Endothelial cell of umbilical vein (primary cell): ENCODE measurements at regions of chr2 and their contacts with region 1.

Region 1: DNA sequence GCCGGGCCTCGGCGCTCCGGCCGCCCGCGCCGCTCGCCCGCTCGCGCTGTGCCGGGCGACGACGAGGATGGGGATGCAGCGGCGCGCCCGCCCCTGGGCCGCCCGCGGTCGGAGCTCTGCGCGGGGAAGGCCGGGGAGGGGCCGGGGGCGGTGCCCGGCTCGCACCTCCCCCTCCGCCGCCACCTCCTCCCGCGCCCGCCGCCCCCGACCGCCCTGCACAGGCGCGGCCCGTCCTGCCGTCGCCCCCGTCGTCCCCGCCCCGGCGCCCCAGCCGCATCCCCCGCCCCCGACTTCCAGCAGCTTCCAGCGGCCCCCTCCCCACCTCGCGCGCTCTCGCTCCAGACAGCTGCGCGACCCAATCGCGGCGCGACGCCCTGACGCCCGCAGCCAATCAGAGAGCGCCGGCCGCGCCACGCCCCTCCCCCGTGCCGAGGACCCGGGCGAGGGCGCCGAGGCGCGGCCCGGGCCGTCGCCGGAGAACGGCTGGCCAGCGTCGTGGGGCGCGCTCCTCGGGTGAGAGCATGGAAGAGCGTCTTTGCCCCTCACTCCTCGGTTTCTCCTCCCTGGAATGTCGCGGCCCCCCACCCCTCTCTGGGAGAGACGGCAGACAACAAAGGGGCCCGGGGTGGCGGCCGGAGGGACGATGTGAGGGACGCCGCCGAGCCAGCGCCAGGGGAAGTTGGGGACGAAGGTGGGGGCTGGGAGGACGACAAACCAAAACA is at the start of gene MBOAT2:
- DNase-seq: peak; percentile 86
- H3K4me3 ChIP-seq: peak within 1 kb of the TSS; percentile 60 to 71 (median 70)
- H3K27ac ChIP-seq: peak within 1 kb of the TSS; percentile 88
- H3K4me1 ChIP-seq: peaks cover 11% of the 10 kb centered on the region
- H3K27me3 ChIP-seq: no peaks in the 10 kb centered on the region
- CTCF ChIP-seq: no peak
- POLR2A ChIP-seq: peak; percentile 88
- total RNA-seq, gene MBOAT2: 17.9 and 22.1 TPM in 2 replicates

Region 2: GRCh38 chr2:8872821-8873432 is 130.8 kb before region 1 on chr2:
- CTCF ChIA-PET with region 1: no interaction called
- POLR2A ChIA-PET with region 1: no interaction called
- dilution Hi-C with region 1: no loop called
- intact Hi-C with region 1: loop called (anchors 5 kb)
- DNase-seq: peak; percentile 70
- H3K4me3 ChIP-seq: no peak overlapping the region
- H3K27ac ChIP-seq: no peak overlapping the region
- H3K4me1 ChIP-seq: no peaks in the 10 kb centered on the region
- H3K27me3 ChIP-seq: no peaks in the 10 kb centered on the region
- CTCF ChIP-seq: peak; percentile 30 to 43
- POLR2A ChIP-seq: no peak

Region 3: GRCh38 chr2:8966123-8966908 is 37.5 kb before region 1 on chr2:
- CTCF ChIA-PET with region 1: no interaction called
- POLR2A ChIA-PET with region 1: no interaction called
- dilution Hi-C with region 1: no loop called
- intact Hi-C with region 1: no loop called
- DNase-seq: no peak
- H3K4me3 ChIP-seq: no peak overlapping the region
- H3K27ac ChIP-seq: no peak overlapping the region
- H3K4me1 ChIP-seq: no peaks in the 10 kb centered on the region
- H3K27me3 ChIP-seq: no peaks in the 10 kb centered on the region
- CTCF ChIP-seq: no peak
- POLR2A ChIP-seq: no peak

Region 4: GRCh38 chr2:8984157-8984556 is 19.6 kb before region 1 on chr2:
- CTCF ChIA-PET with region 1: interaction called, 8 read pairs
- POLR2A ChIA-PET with region 1: no interaction called
- dilution Hi-C with region 1: no loop called
- intact Hi-C with region 1: loop called (anchors 1 kb)
- DNase-seq: peak; percentile 48
- H3K4me3 ChIP-seq: no peak overlapping the region
- H3K27ac ChIP-seq: peak overlapping the region; percentile 64
- H3K4me1 ChIP-seq: peaks cover 16% of the 10 kb centered on the region
- H3K27me3 ChIP-seq: no peaks in the 10 kb centered on the region
- CTCF ChIP-seq: no peak
- POLR2A ChIP-seq: no peak

Region 5: DNA sequence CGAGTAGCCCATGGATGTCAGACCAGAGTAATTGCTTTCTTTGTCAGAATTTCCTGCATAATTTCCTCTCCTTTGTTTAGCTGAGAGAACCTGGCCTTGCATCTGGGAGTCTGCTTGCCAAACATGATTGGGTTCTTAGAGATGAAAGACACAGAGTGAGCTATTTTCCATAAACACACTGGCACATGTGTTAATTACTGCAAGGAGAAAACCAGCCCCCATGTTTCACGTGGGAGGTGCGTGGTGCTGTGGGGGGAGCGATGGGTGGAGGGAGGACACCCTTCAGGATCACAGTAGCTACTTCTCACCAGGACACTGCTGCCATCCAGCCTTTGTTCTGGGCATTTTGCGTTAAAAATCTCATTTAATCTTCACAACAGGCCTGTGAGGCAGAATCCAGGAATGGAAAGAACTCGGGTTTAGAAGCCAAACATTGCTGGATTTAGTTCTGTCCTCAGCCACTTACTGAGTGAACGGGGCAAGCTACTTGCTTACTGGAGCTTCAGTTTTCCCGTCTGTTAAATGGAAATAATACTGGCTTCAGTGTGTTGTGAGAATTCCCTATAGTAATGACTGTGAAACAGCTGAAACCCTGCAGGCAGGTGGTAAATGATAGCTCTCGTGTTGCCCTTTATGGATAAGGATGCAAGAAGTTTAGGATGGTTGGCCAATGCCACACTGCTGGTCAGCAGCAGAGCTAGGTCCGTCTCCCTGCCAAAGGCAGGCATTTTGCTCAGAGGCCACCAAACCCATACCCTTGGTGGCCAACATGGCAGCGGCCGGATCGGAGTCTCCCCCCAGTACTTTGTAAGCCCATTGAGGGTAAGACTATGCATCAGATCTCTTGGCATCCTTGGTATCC is 102.8 kb after region 1 on chr2:
- CTCF ChIA-PET with region 1: no interaction called
- POLR2A ChIA-PET with region 1: no interaction called
- dilution Hi-C with region 1: no loop called
- intact Hi-C with region 1: loop called (anchors 5 kb)
- DNase-seq: peak; percentile 97
- H3K4me3 ChIP-seq: no peak overlapping the region
- H3K27ac ChIP-seq: peak overlapping the region; percentile 25
- H3K4me1 ChIP-seq: peaks cover 15% of the 10 kb centered on the region
- H3K27me3 ChIP-seq: no peaks in the 10 kb centered on the region
- CTCF ChIP-seq: no peak
- POLR2A ChIP-seq: no peak

Region 6: DNA sequence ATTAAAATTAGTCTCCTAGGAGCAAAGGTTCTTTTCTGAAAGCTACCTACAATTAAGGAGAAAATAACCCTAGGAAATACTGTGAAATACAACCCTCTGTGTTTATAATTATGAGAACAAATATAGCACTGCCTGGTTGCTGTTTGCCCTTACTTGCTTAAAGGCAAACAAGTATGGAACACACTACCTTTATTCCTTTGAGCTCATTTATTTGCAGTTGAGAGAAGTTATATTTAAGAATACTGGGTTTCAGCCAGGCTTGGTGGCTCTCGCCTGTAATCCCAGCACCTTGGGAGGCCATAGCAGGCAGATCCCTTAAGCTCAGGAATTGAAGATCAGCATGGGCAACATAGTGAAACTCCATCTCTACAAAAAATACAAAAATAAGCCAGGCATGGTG is 447.5 kb after region 1 on chr2:
- CTCF ChIA-PET with region 1: no interaction called
- POLR2A ChIA-PET with region 1: no interaction called
- dilution Hi-C with region 1: no loop called
- intact Hi-C with region 1: no loop called
- DNase-seq: no peak
- H3K4me3 ChIP-seq: no peak overlapping the region
- H3K27ac ChIP-seq: no peak overlapping the region
- H3K4me1 ChIP-seq: no peaks in the 10 kb centered on the region
- H3K27me3 ChIP-seq: no peaks in the 10 kb centered on the region
- CTCF ChIP-seq: no peak
- POLR2A ChIP-seq: no peak